Endothelial cell of umbilical vein (primary cell): ENCODE measurements at regions of chr18 and their contacts with region 1.

Region 1: DNA sequence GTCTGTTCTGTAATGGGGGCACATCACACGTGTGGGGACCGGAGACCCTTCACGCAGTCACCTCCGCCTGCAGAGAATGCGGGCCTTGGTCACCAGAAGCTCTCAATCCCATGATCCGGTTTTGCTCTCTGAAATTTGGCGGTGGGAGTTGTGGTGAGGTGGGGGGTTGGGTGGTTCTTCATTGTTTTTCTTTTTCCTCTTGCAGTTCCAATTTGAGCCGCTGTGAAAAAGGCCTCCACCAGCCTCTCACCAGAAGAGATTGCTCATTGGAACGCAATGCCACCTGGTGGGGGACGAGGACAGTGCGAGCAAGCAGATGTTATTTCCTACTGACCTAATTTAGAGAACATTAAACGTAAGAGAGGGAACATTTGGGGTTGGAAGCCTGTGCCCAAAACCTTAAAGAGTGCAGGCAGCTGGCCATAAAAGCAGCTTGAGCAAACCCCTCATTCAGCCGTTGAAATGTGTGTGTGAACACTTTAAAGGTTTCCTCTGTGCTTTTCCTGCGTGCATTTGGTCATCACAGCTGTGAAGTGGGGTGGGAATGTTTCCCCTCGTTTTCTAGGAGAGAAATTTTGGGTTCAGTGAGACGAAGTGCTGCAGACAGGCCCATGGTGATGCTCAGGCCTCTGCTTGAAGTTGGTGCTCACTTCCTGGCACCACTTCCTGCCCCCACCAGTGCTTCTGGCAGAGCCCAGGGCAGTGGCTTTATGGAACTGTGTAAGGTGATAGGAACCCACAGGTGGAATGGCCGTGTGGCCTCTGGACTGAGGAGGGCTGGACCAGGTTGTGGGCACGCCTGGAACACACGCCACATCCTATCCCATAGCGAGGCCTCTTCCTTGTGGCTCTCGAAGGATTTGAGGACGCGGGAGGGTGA is 61.7 kb downstream of the ZCCHC2 start:
- DNase-seq: peak; percentile 90
- H3K4me3 ChIP-seq: no peak overlapping the region
- H3K27ac ChIP-seq: no peak overlapping the region
- H3K4me1 ChIP-seq: peaks cover 11% of the 10 kb centered on the region
- H3K27me3 ChIP-seq: no peaks in the 10 kb centered on the region
- CTCF ChIP-seq: peak; percentile 92 to 95
- POLR2A ChIP-seq: no peak

Region 2: GRCh38 chr18:61797696-61798590 is 786.5 kb before region 1 on chr18:
- CTCF ChIA-PET with region 1: no interaction called
- POLR2A ChIA-PET with region 1: no interaction called
- dilution Hi-C with region 1: no loop called
- intact Hi-C with region 1: no loop called
- DNase-seq: no peak
- H3K4me3 ChIP-seq: no peak overlapping the region
- H3K27ac ChIP-seq: no peak overlapping the region
- H3K4me1 ChIP-seq: no peaks in the 10 kb centered on the region
- H3K27me3 ChIP-seq: no peaks in the 10 kb centered on the region
- CTCF ChIP-seq: no peak
- POLR2A ChIP-seq: no peak

Region 3: GRCh38 chr18:61893971-61894750 is 690.3 kb before region 1 on chr18:
- CTCF ChIA-PET with region 1: no interaction called
- POLR2A ChIA-PET with region 1: no interaction called
- dilution Hi-C with region 1: no loop called
- intact Hi-C with region 1: no loop called
- DNase-seq: peak; percentile 82
- H3K4me3 ChIP-seq: peak overlapping the region; percentile 83 to 98 (median 87)
- H3K27ac ChIP-seq: peak overlapping the region; percentile 67
- H3K4me1 ChIP-seq: peaks cover 21% of the 10 kb centered on the region
- H3K27me3 ChIP-seq: no peaks in the 10 kb centered on the region
- CTCF ChIP-seq: peak in 1 of 2 donors; percentile 44
- POLR2A ChIP-seq: peak; percentile 82

Region 4: GRCh38 chr18:62249478-62250097 is 334.9 kb before region 1 on chr18:
- CTCF ChIA-PET with region 1: interaction called, 3 read pairs
- POLR2A ChIA-PET with region 1: no interaction called
- dilution Hi-C with region 1: no loop called
- intact Hi-C with region 1: loop called (anchors 1 kb)
- DNase-seq: peak; percentile 81
- H3K4me3 ChIP-seq: no peak overlapping the region
- H3K27ac ChIP-seq: no peak overlapping the region
- H3K4me1 ChIP-seq: no peaks in the 10 kb centered on the region
- H3K27me3 ChIP-seq: no peaks in the 10 kb centered on the region
- CTCF ChIP-seq: peak; percentile 44 to 71
- POLR2A ChIP-seq: no peak

Region 5: DNA sequence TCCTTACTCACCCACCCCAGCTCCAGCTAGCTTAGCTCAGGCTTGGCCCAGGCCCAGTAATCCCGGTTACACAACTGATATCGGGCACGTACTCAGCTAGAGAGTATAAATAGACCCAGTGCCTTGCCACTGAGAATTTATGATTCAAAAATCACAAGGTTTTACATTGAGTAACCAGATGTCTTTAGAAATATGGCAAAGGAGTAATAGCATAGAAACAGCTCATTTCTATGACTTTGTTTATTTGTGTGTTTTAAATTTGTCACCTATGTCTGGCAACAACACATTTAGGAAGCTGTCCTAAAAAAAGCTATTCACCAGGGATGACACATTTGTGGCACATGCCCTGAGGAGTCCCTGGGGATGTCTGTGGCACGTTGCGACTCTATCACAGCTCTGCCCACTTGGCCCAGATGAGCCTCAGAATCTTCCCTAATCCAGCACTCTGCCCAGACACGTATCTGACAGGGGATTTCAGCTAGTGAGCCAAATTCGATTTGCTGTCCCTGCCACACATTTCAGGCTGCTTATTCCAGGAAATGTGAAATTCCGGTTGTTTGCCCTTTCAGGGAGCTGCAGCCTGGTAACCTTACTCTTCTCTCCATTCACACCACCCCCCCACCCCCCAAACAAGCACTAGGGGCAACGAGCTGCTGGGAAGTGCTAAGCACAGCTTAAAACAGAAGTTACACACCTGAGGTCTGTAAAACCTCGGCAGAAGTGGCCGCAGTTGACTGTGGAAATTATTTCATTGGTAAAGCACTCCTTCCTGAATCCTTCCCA is 147.1 kb before region 1 on chr18:
- CTCF ChIA-PET with region 1: interaction called, 10 read pairs
- POLR2A ChIA-PET with region 1: no interaction called
- dilution Hi-C with region 1: no loop called
- intact Hi-C with region 1: loop called (anchors 1 kb)
- DNase-seq: peak; percentile 57
- H3K4me3 ChIP-seq: no peak overlapping the region
- H3K27ac ChIP-seq: peak overlapping the region; percentile 65
- H3K4me1 ChIP-seq: peaks cover 22% of the 10 kb centered on the region
- H3K27me3 ChIP-seq: no peaks in the 10 kb centered on the region
- CTCF ChIP-seq: no peak
- POLR2A ChIP-seq: no peak

Region 6: GRCh38 chr18:62522504-62523254 is 61.8 kb before region 1 on chr18 and contains the start of gene ZCCHC2:
- CTCF ChIA-PET with region 1: interaction called, 9 read pairs
- POLR2A ChIA-PET with region 1: no interaction called
- dilution Hi-C with region 1: no loop called
- intact Hi-C with region 1: loop called (anchors 1 kb)
- DNase-seq: peak; percentile 99
- H3K4me3 ChIP-seq: peak within 1 kb of the TSS; percentile 85 to 98 (median 96)
- H3K27ac ChIP-seq: peak within 1 kb of the TSS; percentile 94
- H3K4me1 ChIP-seq: peaks cover 30% of the 10 kb centered on the region
- H3K27me3 ChIP-seq: no peaks in the 10 kb centered on the region
- CTCF ChIP-seq: no peak
- POLR2A ChIP-seq: peak; percentile 79
- total RNA-seq, gene ZCCHC2: 20.6 and 27.2 TPM in 2 replicates

Region 7: GRCh38 chr18:62682371-62682770 is 97.9 kb after region 1 on chr18:
- CTCF ChIA-PET with region 1: no interaction called
- POLR2A ChIA-PET with region 1: no interaction called
- dilution Hi-C with region 1: no loop called
- intact Hi-C with region 1: no loop called
- DNase-seq: no peak
- H3K4me3 ChIP-seq: no peak overlapping the region
- H3K27ac ChIP-seq: no peak overlapping the region
- H3K4me1 ChIP-seq: no peaks in the 10 kb centered on the region
- H3K27me3 ChIP-seq: peaks cover 0 to 3% of the 10 kb centered on the region in 2 experiments
- CTCF ChIP-seq: no peak
- POLR2A ChIP-seq: no peak

Region 8: DNA sequence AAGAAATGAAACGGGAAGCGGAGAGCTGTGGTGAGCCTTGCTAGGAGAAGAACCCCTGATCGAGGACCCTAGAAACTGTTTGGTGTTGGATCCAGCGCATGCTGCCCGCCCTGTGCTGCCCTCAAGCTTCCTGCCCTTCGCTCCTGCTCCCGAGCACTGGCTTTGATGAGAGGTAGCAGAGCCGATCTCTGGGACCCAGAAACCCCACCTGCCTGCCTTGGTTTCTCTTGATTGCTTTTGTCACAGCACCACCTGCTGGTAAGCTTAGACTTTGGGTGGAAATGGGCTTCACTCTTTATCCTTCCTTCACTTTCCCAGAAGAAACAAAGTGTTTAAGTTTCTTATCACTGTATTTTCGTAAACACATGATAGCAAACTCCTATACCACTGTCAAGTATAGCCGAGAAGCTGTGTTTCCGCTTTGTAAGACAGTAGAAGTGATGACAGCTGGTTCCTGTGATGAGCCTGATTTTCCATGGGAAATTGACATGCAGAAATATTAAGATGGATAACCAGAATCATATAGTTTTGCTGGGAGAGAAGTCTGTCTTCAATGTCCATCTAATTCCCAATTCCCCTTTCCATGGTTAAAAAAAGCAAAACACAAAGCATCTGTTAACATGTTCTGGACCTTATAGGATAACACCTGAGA is 398.2 kb after region 1 on chr18:
- CTCF ChIA-PET with region 1: interaction called, 95 read pairs
- POLR2A ChIA-PET with region 1: no interaction called
- dilution Hi-C with region 1: no loop called
- intact Hi-C with region 1: loop called (anchors 1 kb)
- DNase-seq: peak; percentile 65
- H3K4me3 ChIP-seq: no peak overlapping the region
- H3K27ac ChIP-seq: no peak overlapping the region
- H3K4me1 ChIP-seq: peaks cover under 1% of the 10 kb centered on the region
- H3K27me3 ChIP-seq: no peaks in the 10 kb centered on the region
- CTCF ChIP-seq: peak; percentile 72 to 75
- POLR2A ChIP-seq: no peak